K562 (cell line): ENCODE measurements at regions of chr7 and their contacts with region 1.

Region 1: DNA sequence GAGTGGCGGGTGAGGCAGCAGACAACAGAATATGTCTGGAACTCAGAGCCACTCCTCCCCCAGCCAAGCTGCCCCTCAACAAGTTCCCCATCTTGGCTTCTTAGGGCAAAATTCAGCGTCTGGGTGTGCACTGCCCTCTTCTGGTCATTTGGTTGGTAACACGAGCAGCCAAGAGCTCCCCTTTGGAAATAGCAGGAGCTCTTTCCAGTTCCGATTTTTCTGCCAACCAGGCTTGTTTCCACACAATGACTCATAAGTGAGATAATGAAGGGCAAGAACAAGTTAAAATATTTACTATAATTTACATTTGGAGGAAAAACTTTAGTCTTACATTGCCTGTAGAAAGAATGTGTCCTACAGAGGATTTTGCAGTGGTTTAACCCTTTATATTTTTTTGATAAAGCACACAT is 70.5 kb downstream of the ADCYAP1R1 start:
- DNase-seq: peak; percentile 59 to 77 (median 74)
- ATAC-seq: peak; percentile 94
- H3K4me3 ChIP-seq: no peak overlapping the region
- H3K27ac ChIP-seq: no peak overlapping the region
- H3K4me1 ChIP-seq: no peaks in the 10 kb centered on the region
- H3K27me3 ChIP-seq: peaks cover 0 to 7% of the 10 kb centered on the region in 2 experiments; a peak in 3 of 5 replicates
- CTCF ChIP-seq: peak; percentile 85 to 92 (median 86)
- EP300 ChIP-seq: no peak
- POLR2A ChIP-seq: no peak
- RAD21 ChIP-seq: peak; percentile 77 to 86

Region 2: DNA sequence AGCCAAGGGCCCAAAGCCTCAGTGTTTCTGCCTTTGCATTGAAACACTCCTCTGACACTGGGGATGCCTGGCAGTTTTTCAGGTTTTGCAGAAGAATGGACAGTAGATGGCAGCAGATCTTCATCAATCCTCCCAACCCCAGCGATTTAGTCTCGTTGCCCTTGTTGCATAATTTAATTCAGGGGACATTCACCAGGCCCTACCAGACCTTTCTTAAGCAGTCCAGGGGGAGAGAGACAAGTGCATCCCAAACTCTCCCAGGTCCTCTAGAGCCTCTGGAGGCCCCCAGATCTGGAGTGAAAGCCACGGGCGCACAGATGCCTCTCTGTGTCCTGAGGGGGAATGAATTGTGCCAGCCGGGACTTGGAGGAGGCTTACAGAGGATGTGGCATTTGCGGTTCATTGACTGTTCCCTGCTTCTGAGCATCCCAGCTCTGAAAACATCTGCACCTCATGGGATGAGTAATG is 321.8 kb before region 1 on chr7:
- CTCF ChIA-PET with region 1: interaction called, 5 read pairs
- POLR2A ChIA-PET with region 1: no interaction called
- in situ Hi-C with region 1: loop called (anchors 5 kb)
- intact Hi-C with region 1: loop called (anchors 2 kb)
- DNase-seq: peak; percentile 62 to 72 (median 65)
- ATAC-seq: peak; percentile 89
- H3K4me3 ChIP-seq: no peak overlapping the region
- H3K27ac ChIP-seq: no peak overlapping the region
- H3K4me1 ChIP-seq: no peaks in the 10 kb centered on the region; a peak in 2 of 5 replicates
- H3K27me3 ChIP-seq: no peaks in the 10 kb centered on the region
- CTCF ChIP-seq: peak; percentile 70 to 83 (median 74)
- EP300 ChIP-seq: no peak
- POLR2A ChIP-seq: no peak
- RAD21 ChIP-seq: peak; percentile 74 to 85

Region 3: GRCh38 chr7:30983042-30983913 is 139.4 kb before region 1 on chr7:
- CTCF ChIA-PET with region 1: interaction called, 31 read pairs
- POLR2A ChIA-PET with region 1: interaction called, 11 read pairs
- in situ Hi-C with region 1: loop called (anchors 5 kb)
- intact Hi-C with region 1: loop called (anchors 1 kb)
- DNase-seq: peak; percentile 80 to 87 (median 86)
- ATAC-seq: peak; percentile 96
- H3K4me3 ChIP-seq: no peak overlapping the region
- H3K27ac ChIP-seq: no peak overlapping the region
- H3K4me1 ChIP-seq: peaks cover 0 to 4% of the 10 kb centered on the region in 2 experiments; a peak in 1 of 5 replicates
- H3K27me3 ChIP-seq: peaks cover 37 to 61% of the 10 kb centered on the region in 2 experiments
- CTCF ChIP-seq: peak; percentile 87 to 94 (median 90)
- EP300 ChIP-seq: no peak
- POLR2A ChIP-seq: no peak
- RAD21 ChIP-seq: peak; percentile 68 to 93

Region 4: GRCh38 chr7:31058122-31058521 is 64.5 kb before region 1 on chr7:
- CTCF ChIA-PET with region 1: no interaction called
- POLR2A ChIA-PET with region 1: no interaction called
- in situ Hi-C with region 1: no loop called
- intact Hi-C with region 1: loop called (anchors 5 kb)
- DNase-seq: peak in 1 of 4 experiments; percentile 9
- ATAC-seq: peak; percentile 45
- H3K4me3 ChIP-seq: no peak overlapping the region
- H3K27ac ChIP-seq: no peak overlapping the region
- H3K4me1 ChIP-seq: peaks cover 0 to 3% of the 10 kb centered on the region in 2 experiments; a peak in 1 of 5 replicates
- H3K27me3 ChIP-seq: peaks cover 0 to 24% of the 10 kb centered on the region in 2 experiments; a peak in 3 of 5 replicates
- CTCF ChIP-seq: no peak
- EP300 ChIP-seq: no peak
- POLR2A ChIP-seq: no peak
- RAD21 ChIP-seq: no peak